Lower leg skin (tissue), 4 donors: ENCODE measurements at regions of chr17 and their contacts with region 1.

Region 1: DNA sequence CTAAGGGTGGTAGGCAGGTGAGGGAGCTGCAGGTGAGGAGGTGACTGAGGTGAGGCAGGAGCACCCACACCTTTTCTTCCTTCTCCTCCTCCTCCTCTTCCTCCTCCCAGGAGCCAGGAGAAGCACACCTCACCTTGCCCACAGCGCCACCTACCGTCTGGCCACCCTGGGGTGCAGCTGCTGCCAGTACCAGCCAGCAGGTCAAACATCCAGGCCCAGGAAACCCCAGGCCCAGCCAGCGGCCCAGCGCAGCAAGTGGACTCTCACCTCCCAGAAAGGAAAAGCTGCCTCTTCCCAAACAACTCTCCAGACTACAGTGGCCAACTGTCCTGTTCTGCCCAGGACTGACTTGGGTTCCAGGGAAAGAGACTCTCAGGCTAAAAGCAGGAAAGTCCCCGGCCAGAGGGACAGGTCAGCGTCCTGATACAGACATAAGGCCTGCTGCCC is 22.7 kb downstream of the PEMT start:
- DNase-seq: no peak
- H3K4me3 ChIP-seq: no peak overlapping the region
- CTCF ChIP-seq: no peak
- POLR2A ChIP-seq: no peak

Region 2: GRCh38 chr17:17356149-17356930 is 212.4 kb before region 1 on chr17:
- intact Hi-C with region 1: loop called (anchors 2 kb)
- DNase-seq: peak; percentile 80 to 96
- H3K4me3 ChIP-seq: no peak overlapping the region
- CTCF ChIP-seq: peak in 2 of 3 donors; percentile 84 to 100
- POLR2A ChIP-seq: no peak

Region 3: GRCh38 chr17:17511881-17512858 is 56.6 kb before region 1 on chr17:
- intact Hi-C with region 1: loop called (anchors 10 kb)
- DNase-seq: no peak
- H3K4me3 ChIP-seq: no peak overlapping the region
- CTCF ChIP-seq: no peak
- POLR2A ChIP-seq: no peak